Posterior vena cava (tissue), 2 donors: ENCODE measurements at regions of chr6 and their contacts with region 1.

Region 1: GRCh38 chr6:85756982-85757381 is 114.3 kb upstream of the SYNCRIP start:
- DNase-seq: no peak

Region 2: DNA sequence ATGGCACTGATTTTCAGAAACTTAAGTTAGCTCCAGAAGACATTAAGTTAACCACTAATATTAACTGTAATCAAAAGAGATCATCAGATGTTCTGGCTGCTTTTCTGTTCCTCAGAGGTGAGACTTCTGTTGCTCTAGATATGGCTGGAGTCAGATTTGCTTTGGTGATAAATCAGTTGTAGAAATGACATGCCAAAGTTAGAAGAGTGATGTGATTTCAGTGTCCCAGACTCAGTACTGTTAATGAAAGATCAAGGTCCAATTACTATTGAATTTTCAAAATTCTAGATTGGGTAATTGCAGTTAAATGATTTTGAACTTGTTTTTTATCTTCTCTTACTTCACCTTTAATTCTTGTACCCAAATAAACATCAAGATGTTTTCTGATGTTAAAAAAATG is 288.1 kb after region 1 on chr6:
- intact Hi-C with region 1: no loop called
- DNase-seq: no peak

Region 3: DNA sequence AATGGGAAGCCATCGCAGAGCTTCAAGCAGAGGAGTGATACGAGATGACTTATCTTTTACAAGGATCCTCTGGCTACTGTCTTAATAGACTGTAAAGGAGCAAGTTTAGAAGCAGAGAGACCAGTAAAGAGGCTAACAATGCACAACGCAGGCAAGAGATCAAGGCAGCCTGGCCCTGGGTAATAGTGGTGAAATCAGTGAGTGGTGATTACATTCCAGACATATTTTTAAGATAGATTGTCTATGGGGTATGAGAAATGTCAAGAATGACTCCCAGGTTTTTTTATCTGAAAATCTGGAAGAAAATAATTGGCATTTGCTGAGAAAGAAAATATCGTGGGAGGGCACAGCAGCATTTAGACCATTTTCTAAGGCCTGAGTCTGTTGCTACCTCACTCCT is 966.7 kb after region 1 on chr6:
- intact Hi-C with region 1: no loop called
- DNase-seq: no peak

Region 4: GRCh38 chr6:87029711-87030314 is 1272.8 kb after region 1 on chr6:
- intact Hi-C with region 1: loop called in 1 of 2 experiments (anchors 5 kb)
- DNase-seq: no peak